BJ (cell line): ENCODE measurements at regions of chr15 and their contacts with region 1.

Region 1: DNA sequence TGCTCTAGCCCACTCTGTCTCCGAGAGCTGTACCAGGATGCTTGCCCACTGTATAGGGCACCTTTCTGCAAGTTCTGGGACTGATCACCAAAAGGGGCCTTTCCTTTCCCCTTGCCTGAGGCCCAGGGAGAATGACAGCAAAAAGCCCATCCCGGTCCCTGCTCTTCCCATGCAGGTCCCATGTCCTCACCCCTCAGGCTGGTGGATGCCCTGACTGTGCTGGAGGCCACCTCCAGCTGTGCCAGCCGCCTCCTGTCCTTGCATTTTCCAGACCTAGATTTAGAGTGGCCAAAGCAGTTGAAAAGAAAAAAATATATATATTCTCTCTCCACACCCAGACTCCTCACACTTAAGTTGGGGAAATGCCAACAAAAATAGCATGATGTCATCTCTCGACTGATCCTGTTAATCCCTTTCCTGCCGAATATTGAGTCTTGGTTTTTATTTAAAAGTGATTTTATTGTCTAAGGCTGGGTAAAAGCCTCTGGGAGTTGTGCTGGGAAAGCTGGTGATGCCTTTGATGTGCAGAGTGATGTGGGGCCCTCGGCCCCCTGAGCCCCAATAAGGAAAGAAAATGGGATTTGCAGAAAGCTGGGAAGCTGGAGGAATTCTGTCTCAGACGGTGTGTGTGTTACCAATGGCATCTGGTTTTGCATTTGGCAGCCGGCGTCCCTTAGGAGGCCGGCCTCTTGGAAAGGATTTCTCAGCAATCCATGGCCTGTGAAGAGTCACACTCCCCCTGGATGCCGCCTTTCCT is 29.3 kb upstream of the TPM1 start:
- DNase-seq: no peak
- H3K4me3 ChIP-seq: no peak overlapping the region
- H3K27me3 ChIP-seq: no peaks in the 10 kb centered on the region
- CTCF ChIP-seq: no peak

Region 2: GRCh38 chr15:63492541-63493077 is 479.4 kb after region 1 on chr15:
- CTCF ChIA-PET with region 1: no interaction called
- POLR2A ChIA-PET with region 1: interaction called, 10 read pairs
- DNase-seq: no peak
- H3K4me3 ChIP-seq: no peak overlapping the region
- H3K27me3 ChIP-seq: peaks cover 9% of the 10 kb centered on the region
- CTCF ChIP-seq: no peak